ENCODE measurements at regions of chr17 and their contacts with region 1.

Region 1: DNA sequence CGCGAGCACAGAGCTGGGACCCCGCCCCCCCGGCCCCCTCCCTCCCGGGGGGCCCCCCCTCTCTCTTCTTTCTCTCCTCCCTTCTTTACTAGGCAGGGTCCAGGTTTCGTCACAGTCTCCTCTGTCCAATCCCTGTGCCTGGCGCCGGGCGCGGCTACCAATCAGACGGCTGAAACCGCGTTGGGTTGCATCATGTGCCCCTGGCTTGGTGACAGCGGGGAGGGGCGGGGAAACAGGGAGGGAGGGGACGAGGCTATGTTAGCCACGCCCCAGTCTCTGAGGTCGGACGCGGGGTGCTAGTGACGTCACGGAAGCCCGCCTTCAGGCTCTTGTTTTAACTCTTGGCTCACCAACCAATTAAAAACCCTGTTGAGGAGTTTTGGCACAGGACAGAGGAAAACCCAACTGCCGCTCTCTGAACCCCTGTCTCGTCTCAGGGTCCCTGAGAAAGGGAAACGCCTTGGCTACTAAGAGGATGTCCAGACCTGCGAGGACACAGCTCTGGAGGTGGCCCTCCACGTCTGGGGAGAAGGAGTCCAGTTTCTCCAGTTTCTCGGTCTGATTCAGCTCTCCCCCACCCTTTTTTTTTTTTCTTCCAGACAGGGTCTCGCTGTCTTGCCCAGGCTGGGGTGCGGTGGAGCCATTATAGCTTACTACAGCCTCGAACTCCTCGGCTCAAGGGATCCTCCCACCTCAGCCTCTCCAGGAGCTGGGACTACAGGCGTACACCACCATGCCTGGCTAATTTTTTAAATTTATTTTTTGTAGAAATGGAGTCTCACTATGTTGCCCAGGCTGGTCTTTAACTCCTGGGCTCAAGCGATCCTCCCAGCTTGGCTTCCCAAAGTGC is 439 bp upstream of the PLEKHH3 start:
- DNase-seq: peak; percentile 100
- H3K4me3 ChIP-seq: peak overlapping the region; percentile 87 to 94 (median 89)
- H3K27ac ChIP-seq: peak overlapping the region; percentile 96
- H3K4me1 ChIP-seq: peaks cover 12 to 24% of the 10 kb centered on the region in 2 donors
- H3K27me3 ChIP-seq: no peaks in the 10 kb centered on the region
- CTCF ChIP-seq: no peak
- POLR2A ChIP-seq: no peak

Region 2: GRCh38 chr17:42577532-42578281 is 99.5 kb before region 1 on chr17 and contains the start of gene PSMC3IP:
- intact Hi-C with region 1: loop called (anchors 10 kb)
- DNase-seq: peak; percentile 93 to 97
- H3K4me3 ChIP-seq: peak within 1 kb of the TSS; percentile 54 to 67 (median 65)
- H3K27ac ChIP-seq: peak within 1 kb of the TSS; percentile 76 to 80
- H3K4me1 ChIP-seq: no peaks in the 10 kb centered on the region
- H3K27me3 ChIP-seq: no peaks in the 10 kb centered on the region
- CTCF ChIP-seq: peak in 2 of 3 donors; percentile 36 to 43
- POLR2A ChIP-seq: no peak
- total RNA-seq, gene PSMC3IP: 3.3 to 4.2 (median 3.5) TPM

Region 3: GRCh38 chr17:42618442-42619150 is 58.6 kb before region 1 on chr17:
- intact Hi-C with region 1: loop called (anchors 2 kb)
- DNase-seq: peak in 1 of 2 donors; percentile 60
- H3K4me3 ChIP-seq: no peak overlapping the region
- H3K27ac ChIP-seq: peak overlapping the region; percentile 5 to 52
- H3K4me1 ChIP-seq: no peaks in the 10 kb centered on the region
- H3K27me3 ChIP-seq: no peaks in the 10 kb centered on the region
- CTCF ChIP-seq: peak in 2 of 3 donors; percentile 12 to 37
- POLR2A ChIP-seq: no peak

Region 4: GRCh38 chr17:43024407-43025289 is 347.4 kb after region 1 on chr17 and contains the start of gene RND2:
- intact Hi-C with region 1: loop called (anchors 5 kb)
- DNase-seq: peak; percentile 83 to 89
- H3K4me3 ChIP-seq: peak within 1 kb of the TSS; percentile 43 to 70 (median 64)
- H3K27ac ChIP-seq: peak within 1 kb of the TSS; percentile 88
- H3K4me1 ChIP-seq: no peaks in the 10 kb centered on the region
- H3K27me3 ChIP-seq: no peaks in the 10 kb centered on the region
- CTCF ChIP-seq: peak; percentile 71 to 76 (median 73)
- POLR2A ChIP-seq: peak; percentile 35
- total RNA-seq, gene RND2: 0.16 to 2.0 (median 1.3) TPM